ENCODE measurements at regions of chr3 and their contacts with region 1.

Region 1: DNA sequence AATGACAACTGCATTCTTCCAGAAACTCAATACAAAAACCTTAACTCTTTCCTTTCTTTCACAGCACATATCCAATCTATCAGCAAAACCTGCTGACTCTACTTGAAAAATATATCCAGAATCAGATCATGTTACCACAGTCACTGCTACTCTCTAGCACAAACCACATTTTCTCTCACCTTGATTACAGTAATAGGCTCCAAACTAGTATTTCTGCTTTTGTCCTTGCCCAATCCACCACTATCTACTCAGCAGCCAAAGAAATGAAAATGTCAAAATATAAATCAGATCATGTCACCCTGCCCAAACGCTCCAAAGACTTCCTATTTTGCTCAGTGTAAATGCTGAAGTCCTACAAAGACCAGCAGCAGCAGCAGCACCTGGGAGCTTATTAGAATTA is 15.1 kb downstream of the TMCC1 start:
- DNase-seq: no peak
- CTCF ChIP-seq: no peak

Region 2: GRCh38 chr3:129507181-129507831 is 371.1 kb before region 1 on chr3:
- CTCF ChIA-PET with region 1: no interaction called
- POLR2A ChIA-PET with region 1: no interaction called
- DNase-seq: no peak
- CTCF ChIP-seq: no peak

Region 3: GRCh38 chr3:129633751-129634392 is 244.5 kb before region 1 on chr3:
- CTCF ChIA-PET with region 1: no interaction called
- POLR2A ChIA-PET with region 1: no interaction called
- DNase-seq: no peak
- CTCF ChIP-seq: no peak

Region 4: GRCh38 chr3:129777806-129778205 is 100.6 kb before region 1 on chr3:
- CTCF ChIA-PET with region 1: no interaction called
- POLR2A ChIA-PET with region 1: no interaction called
- DNase-seq: no peak
- CTCF ChIP-seq: no peak

Region 5: GRCh38 chr3:129845956-129846355 is 32.4 kb before region 1 on chr3:
- CTCF ChIA-PET with region 1: no interaction called
- POLR2A ChIA-PET with region 1: no interaction called
- DNase-seq: no peak
- CTCF ChIP-seq: no peak

Region 6: DNA sequence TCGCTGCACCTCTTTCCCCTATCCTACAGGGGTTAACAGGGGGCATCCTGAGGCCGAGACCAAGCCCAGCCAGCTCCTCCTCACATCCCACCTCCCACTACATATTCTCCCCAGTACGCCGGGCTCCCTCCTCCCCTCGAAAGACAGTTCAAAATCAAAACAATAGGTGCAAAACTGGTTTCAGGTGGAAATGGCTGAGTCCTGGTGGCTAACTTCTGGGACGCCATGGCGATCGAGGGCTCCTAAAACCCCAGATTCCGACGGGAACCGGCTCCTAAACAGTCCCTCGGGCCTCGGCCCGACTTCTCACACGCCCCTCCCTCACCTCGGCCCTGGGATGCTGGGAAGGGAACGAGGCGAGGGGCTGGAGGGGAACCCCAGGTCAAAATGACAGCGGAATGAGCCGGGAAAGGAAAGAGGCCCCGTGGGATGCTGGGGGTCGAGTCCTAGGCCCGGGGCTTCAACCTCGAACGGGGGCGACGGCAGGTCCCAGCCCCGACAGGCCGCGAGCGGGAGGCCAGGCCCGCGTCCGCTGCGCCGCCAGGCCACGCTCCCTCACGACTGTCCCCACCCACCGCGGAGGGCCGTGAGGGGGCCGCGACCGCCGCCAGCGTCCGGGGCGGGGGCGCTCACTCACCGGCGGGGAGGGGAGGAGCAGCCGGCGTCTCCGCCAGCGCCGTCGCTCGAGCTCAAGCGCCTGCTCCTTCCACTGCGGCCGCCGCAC is 14.6 kb after region 1 on chr3:
- CTCF ChIA-PET with region 1: interaction called, 27 read pairs
- POLR2A ChIA-PET with region 1: no interaction called
- DNase-seq: peak; percentile 86
- CTCF ChIP-seq: no peak

Measured in GM10248 (cell line).